Motor neuron (in vitro differentiated cells): ENCODE measurements at regions of chr4 and their contacts with region 1.

Region 1: GRCh38 chr4:20684852-20685763 is 15.2 kb upstream of the PACRGL start:
- ATAC-seq: peak in 5 of 8 experiments; percentile 14 to 54 (median 34)
- H3K4me3 ChIP-seq: no peak overlapping the region
- H3K27ac ChIP-seq: no peak overlapping the region
- H3K4me1 ChIP-seq: peaks cover 3 to 8% of the 10 kb centered on the region in 2 donors

Region 2: DNA sequence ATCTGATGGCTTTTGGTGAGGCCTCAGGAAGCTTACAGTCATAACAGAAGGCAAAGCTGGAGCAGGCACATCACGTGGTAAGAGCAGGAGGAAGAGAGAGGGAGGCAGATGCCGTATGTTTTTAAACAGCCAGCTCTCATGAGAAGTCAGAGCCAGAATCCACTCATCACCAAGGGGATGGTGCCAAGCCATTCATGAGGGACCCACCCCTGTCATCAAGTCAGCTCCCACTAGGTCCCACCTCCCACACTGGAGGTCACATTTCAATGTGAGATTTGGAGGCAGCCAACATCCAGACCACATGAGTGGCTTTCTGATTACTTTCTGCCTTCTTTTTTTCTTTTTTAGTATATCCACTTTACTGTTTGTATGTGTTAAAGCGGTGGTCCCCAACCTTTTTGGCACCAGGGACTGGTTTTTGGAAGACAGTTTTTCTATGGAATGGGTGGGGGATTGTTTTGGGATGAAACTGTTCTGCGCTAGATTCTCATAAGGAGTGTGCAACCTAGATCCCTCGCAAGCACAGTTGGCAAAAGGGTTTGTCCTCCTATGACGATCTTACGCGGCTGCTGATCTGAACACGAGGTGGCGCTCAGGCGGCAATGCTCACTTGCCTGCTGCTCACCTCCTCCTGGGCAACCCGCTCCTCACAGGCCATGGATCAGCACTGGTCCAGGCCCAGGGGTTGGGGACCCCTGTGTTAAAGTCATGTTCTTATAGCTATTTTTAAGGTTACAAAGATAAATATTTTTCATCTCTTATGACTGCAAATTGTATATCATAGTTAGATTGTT is 371.7 kb before region 1 on chr4:
- in situ Hi-C with region 1: loop called in 2 of 9 experiments (anchors 25 kb)
- ATAC-seq: peak in 1 of 8 experiments; percentile 62
- H3K4me3 ChIP-seq: no peak overlapping the region
- H3K27ac ChIP-seq: no peak overlapping the region
- H3K4me1 ChIP-seq: peaks cover 9 to 17% of the 10 kb centered on the region in 2 donors

Region 3: DNA sequence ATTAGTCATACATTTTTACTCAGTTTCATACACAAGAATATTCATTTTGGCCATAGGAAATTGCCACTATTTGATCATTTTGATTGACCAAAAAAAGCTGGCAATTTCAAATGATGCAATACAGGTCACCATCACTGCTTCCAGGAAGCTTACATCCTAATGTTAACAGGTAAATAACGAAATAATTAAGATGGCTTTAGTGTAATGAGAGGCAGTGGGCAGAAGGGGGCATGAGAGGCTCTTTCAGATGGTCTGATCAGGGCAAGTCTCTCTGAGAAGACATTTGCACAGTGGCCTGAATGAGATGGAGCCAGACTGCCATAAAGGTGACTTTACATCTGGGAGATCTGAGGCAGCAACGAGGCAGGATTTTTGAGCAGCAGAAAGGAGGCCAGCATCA is 262.7 kb before region 1 on chr4:
- in situ Hi-C with region 1: loop called in 4 of 9 experiments (anchors 25 kb)
- ATAC-seq: peak; percentile 44 to 94 (median 62)
- H3K4me3 ChIP-seq: no peak overlapping the region
- H3K27ac ChIP-seq: no peak overlapping the region
- H3K4me1 ChIP-seq: peaks cover 0 to 8% of the 10 kb centered on the region in 2 donors